ENCODE measurements at regions of chr1 and their contacts with region 1.

Region 1: GRCh38 chr1:28845786-28846543 is 34.0 kb downstream of the OPRD1 start:
- DNase-seq: peak; percentile 24 to 47
- H3K4me3 ChIP-seq: no peak overlapping the region
- H3K4me3 Mint-ChIP-seq: no peak overlapping the region
- H3K27ac Mint-ChIP-seq: no peak overlapping the region
- H3K4me1 ChIP-seq: no peaks in the 10 kb centered on the region
- H3K4me1 Mint-ChIP-seq: peaks cover 3% of the 10 kb centered on the region
- H3K27me3 ChIP-seq: no peaks in the 10 kb centered on the region
- H3K27me3 Mint-ChIP-seq: no peaks in the 10 kb centered on the region
- CTCF ChIP-seq: peak; percentile 18 to 26

Region 2: DNA sequence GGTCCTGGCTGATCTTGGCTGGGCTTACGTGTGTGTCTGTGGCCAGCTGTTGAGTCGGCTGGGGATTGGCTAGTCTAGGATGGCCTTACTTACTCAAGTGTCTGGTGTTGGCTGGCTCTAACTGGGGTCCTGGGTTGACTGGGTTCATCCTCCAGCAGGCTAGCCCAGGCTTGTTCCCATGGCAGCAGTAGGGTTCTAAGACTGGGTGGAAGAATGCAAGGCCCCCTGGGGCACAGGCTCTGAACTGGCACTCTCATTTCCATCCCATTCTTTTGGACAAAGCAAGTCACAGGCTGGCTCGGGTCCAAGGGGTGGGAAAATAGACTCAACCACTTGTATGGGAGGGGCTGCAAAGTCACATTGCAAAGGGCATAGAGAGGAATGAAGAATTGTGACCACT is 41.9 kb before region 1 on chr1:
- CTCF ChIA-PET with region 1: no interaction called
- POLR2A ChIA-PET with region 1: no interaction called
- intact Hi-C with region 1: no loop called
- DNase-seq: no peak
- H3K4me3 ChIP-seq: no peak overlapping the region
- H3K4me3 Mint-ChIP-seq: no peak overlapping the region
- H3K27ac Mint-ChIP-seq: no peak overlapping the region
- H3K4me1 ChIP-seq: no peaks in the 10 kb centered on the region
- H3K4me1 Mint-ChIP-seq: no peaks in the 10 kb centered on the region
- H3K27me3 ChIP-seq: no peaks in the 10 kb centered on the region
- H3K27me3 Mint-ChIP-seq: no peaks in the 10 kb centered on the region
- CTCF ChIP-seq: no peak

Region 3: DNA sequence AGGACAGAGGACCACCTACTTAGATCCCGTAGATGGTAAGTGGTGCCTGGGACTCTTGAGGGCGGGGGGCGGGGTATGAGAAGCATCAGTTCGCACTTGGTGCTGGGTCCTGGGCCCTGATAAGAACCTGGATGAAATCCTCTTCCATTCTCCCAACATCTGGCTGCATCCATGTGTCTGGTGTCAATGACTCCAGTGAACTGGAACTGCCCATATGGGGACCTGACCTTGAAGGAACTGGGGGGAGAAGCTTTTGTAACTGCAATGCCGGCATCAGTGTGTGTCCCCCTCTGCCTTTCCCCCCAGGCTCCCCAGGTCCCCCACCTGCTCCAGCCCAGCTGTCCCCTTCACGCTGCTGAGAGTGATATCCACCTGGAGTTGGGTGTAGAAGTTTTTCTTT is 18.7 kb after region 1 on chr1:
- CTCF ChIA-PET with region 1: no interaction called
- POLR2A ChIA-PET with region 1: no interaction called
- intact Hi-C with region 1: loop called (anchors 1 kb)
- DNase-seq: no peak
- H3K4me3 ChIP-seq: no peak overlapping the region
- H3K4me3 Mint-ChIP-seq: no peak overlapping the region
- H3K27ac Mint-ChIP-seq: no peak overlapping the region
- H3K4me1 ChIP-seq: 0 out of 2 replicates have a peak, but pooled peaks cover 3% of the 10 kb centered on the region
- H3K4me1 Mint-ChIP-seq: no peaks in the 10 kb centered on the region
- H3K27me3 ChIP-seq: no peaks in the 10 kb centered on the region
- H3K27me3 Mint-ChIP-seq: no peaks in the 10 kb centered on the region
- CTCF ChIP-seq: no peak

Region 4: DNA sequence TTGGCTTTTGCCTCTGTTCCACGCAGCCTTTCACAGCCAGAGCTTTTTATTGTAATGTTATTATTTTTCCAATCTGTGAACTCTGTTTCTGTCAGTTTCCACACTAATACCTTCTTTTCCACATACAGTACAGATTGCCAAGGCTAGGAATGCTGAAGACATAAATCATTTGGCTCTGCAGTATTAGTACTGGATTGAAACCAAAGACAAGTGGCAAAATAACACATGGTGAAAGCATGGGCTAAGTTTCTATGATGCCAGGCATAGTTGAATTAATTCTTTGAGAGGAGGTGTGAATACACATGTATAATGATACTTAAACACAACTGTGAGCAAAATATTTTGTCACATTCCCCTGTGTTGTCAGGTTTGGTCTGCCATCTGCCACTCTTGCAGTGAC is 204.2 kb after region 1 on chr1:
- CTCF ChIA-PET with region 1: no interaction called
- POLR2A ChIA-PET with region 1: no interaction called
- intact Hi-C with region 1: no loop called
- DNase-seq: no peak
- H3K4me3 ChIP-seq: no peak overlapping the region
- H3K4me3 Mint-ChIP-seq: no peak overlapping the region
- H3K27ac Mint-ChIP-seq: no peak overlapping the region
- H3K4me1 ChIP-seq: no peaks in the 10 kb centered on the region
- H3K4me1 Mint-ChIP-seq: no peaks in the 10 kb centered on the region
- H3K27me3 ChIP-seq: no peaks in the 10 kb centered on the region
- H3K27me3 Mint-ChIP-seq: no peaks in the 10 kb centered on the region
- CTCF ChIP-seq: no peak